Head of caudate nucleus (tissue), 42 donors: ENCODE measurements at regions of chr11 and their contacts with region 1.

Region 1: DNA sequence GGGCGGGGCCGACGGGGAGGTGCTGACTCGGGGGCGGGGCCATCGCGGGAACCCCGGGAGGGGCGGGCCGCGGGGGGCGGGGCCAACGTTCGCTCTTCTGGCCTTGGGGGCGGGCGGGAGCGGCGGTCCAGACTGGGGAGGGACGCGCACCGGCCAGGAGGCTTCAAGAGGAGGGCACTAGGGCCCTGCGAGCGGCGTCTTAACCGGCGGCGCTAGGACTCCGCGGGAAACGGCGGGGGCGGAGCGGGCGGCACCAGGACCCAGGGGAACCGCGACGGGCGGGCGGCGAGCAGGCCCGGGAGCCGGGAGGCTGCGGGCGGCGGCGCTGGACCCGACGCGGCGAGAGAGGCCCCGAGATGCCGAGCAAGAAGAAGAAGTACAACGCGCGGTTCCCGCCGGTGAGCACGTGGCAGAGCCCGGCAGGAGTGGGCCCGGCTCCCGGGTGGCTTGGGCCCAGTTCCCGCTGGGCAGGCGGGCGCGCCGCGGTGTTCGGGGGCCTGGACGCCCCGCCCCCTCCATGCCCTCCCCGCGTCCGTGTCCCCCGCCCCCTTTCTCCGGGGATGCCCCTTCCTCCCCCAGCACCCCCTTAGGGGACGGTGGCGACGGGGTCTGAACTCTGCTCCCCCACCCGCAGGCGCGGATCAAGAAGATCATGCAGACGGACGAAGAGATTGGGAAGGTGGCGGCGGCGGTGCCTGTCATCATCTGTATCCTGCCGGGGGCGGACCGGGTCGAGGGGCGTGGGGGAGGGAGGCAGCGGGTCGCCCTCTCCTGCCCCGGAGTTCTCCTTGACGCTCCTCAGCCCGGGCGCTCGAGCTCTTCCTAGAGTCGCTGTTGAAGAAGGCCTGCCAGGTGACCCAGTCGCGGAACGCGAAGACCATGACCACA is at the start of gene DRAP1:
- DNase-seq: peak; percentile 96 to 100 (median 99)

Region 2: DNA sequence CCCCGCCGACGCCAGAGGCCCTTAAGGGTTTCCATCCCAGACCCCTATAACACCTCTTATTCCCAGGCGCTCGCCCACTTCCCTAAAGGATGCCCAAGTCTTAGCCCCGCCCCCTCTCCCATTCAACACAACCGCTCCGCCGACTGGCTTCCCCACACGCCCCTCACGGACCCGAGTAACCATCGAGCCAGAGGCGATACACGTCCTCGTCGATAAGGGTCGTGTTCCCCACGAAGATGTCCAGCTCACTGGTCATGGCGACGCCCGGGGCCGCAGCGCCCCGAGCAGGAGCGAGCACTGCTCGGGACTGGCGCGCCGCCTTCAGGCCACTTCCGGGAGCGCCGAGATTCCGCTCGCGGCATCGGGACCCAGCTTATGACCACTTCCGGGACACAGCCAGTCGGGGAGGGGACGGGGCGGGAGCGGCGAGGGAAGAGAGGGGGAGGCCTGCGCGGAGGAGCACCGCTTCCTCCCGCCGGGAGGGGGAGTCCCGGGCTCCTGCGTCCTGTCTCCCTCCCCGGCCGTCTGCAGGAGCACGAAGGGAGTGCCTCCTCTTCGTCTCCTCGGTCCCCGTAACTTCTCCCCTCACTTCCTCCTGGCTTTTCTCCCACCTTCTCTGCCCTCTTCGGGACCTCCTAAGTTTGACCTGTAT is 31.1 kb before region 1 on chr11 and contains the start of gene FIBP:
- intact Hi-C with region 1: loop called (anchors 5 kb)
- DNase-seq: peak; percentile 92 to 99 (median 97)

Region 3: GRCh38 chr11:65961232-65961901 is 42.0 kb after region 1 on chr11 and contains the start of gene SART1:
- intact Hi-C with region 1: loop called (anchors 5 kb)
- DNase-seq: peak; percentile 93 to 100 (median 98)